MCF 10A (cell line): ENCODE measurements at regions of chr6 and their contacts with region 1.

Region 1: DNA sequence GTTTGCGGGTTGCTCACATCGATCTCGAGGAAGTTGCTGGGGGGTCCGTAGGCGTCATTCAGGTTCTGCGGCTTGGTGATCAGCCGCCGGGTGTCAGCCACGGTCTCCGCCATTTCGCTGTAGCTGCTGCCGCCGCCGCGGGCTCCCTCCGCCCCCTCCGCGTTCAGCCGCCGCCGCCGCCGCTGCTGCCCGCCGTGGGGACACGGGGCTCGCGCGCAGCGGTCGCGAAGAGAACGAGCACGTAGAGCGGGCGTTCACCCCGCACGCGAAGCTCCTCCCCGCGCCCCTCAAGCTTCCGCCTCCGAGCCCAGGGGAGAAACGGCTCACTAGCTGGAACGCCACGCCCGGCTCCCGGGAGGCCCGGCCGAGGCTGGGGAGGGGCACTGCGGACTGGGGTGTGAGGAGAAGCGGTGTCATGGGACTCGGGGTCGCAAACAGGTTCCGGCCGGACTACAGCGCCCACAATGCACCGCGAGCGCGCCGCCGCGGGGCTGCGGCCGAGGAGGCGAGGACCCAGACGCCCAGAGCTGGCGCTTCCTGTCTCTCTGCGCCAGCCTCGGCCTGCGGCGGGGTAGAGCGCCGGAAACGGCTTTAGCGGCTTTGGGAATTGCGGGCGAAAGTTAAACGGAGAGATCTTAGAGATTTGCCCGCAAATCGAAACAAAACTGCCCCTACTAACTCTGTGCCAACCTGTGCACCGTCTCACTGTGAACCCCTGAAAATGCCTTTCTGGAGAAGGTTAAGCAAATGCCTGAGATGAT is at the start of gene SNX3:
- DNase-seq: peak; percentile 96
- H3K4me3 Mint-ChIP-seq: peak within 1 kb of the TSS; percentile 93
- H3K27ac Mint-ChIP-seq: peak within 1 kb of the TSS; percentile 89
- H3K4me1 Mint-ChIP-seq: peaks cover 7% of the 10 kb centered on the region
- H3K27me3 Mint-ChIP-seq: no peaks in the 10 kb centered on the region
- CTCF ChIP-seq: no peak
- total RNA-seq, gene SNX3: 114 and 138 TPM in 2 replicates

Region 2: GRCh38 chr6:107674995-107675738 is 585.8 kb before region 1 on chr6:
- CTCF ChIA-PET with region 1: no interaction called
- POLR2A ChIA-PET with region 1: no interaction called
- intact Hi-C with region 1: no loop called
- DNase-seq: peak; percentile 82
- H3K4me3 Mint-ChIP-seq: no peak overlapping the region
- H3K27ac Mint-ChIP-seq: peak overlapping the region; percentile 51
- H3K4me1 Mint-ChIP-seq: peaks cover 5% of the 10 kb centered on the region
- H3K27me3 Mint-ChIP-seq: no peaks in the 10 kb centered on the region
- CTCF ChIP-seq: peak; percentile 89

Region 3: GRCh38 chr6:108235127-108235526 is 25.9 kb before region 1 on chr6:
- CTCF ChIA-PET with region 1: no interaction called
- POLR2A ChIA-PET with region 1: interaction called, 12 read pairs
- intact Hi-C with region 1: no loop called
- DNase-seq: no peak
- H3K4me3 Mint-ChIP-seq: no peak overlapping the region
- H3K27ac Mint-ChIP-seq: no peak overlapping the region
- H3K4me1 Mint-ChIP-seq: no peaks in the 10 kb centered on the region
- H3K27me3 Mint-ChIP-seq: no peaks in the 10 kb centered on the region
- CTCF ChIP-seq: no peak

Region 4: DNA sequence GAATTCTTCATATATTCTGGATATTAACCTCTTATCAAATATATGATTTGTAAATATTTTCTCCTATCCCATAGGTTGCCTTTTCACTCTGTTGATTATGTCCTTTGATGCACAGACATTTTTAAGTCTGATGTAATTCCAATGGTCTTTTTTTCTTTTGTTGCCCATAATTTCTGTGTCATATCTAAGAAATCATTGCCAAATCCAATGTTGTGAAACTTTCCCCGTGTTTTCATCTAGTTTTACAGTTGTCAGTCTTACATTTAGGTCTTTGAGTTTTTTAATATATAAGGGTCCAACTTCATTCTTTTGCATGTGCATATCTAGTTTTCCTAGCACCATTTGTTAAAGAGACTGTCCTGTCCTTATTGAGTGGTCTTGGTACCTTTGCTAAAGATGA is 722.2 kb after region 1 on chr6:
- CTCF ChIA-PET with region 1: no interaction called
- POLR2A ChIA-PET with region 1: no interaction called
- intact Hi-C with region 1: no loop called
- DNase-seq: peak; percentile 44
- H3K4me3 Mint-ChIP-seq: no peak overlapping the region
- H3K27ac Mint-ChIP-seq: no peak overlapping the region
- H3K4me1 Mint-ChIP-seq: no peaks in the 10 kb centered on the region
- H3K27me3 Mint-ChIP-seq: no peaks in the 10 kb centered on the region
- CTCF ChIP-seq: no peak